Transverse colon (tissue), 4 donors: ENCODE measurements at regions of chr19 and their contacts with region 1.

Region 1: DNA sequence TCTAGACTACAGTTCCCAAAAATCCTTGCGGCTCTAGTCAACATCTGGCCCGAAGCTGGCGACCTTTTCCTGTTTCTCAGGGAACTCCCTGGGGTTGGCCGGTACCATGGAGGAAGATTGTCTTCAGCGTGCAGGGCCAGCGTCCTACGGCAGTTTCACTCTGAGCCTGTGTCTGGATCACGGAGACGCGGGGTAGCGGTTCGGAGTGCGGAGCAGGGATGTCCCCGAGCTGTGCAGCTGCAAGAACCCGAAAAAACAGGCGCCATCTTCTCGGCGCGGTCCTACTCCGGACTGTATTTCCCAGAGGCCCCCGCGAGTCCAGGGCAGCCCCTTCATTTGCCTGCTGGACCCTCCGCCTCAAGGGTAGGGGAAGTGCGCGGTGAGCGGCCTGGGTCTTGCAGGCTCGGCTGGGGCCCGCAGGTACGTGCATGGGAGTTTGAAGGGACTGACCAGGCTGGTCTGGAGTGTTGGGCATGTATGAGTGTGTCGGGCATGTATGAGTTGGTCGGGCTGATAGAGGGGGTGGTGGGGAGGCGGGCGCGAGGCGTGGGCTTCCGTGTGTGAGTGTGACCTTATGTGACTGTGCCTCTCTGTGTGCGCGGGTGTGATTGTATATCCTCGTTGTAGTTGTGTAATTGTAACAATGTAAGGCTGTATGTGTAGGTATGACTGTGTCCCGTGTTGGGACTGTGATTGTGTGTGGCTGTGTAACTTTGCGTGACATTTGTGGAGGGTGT is at the start of gene ZNF383:
- DNase-seq: peak; percentile 86
- H3K4me3 ChIP-seq: peak within 1 kb of the TSS; percentile 61 to 86 (median 80)
- H3K27ac ChIP-seq: peak within 1 kb of the TSS; percentile 87 to 96 (median 90)
- H3K4me1 ChIP-seq: peaks cover 4 to 13% (median 10%) of the 10 kb centered on the region in 4 donors
- H3K27me3 ChIP-seq: no peaks in the 10 kb centered on the region
- CTCF ChIP-seq: no peak
- EP300 ChIP-seq: no peak
- POLR2A ChIP-seq: peak; percentile 75
- total RNA-seq, gene ZNF383: 1.5 to 54.9 (median 9.5) TPM

Region 2: GRCh38 chr19:37095859-37096258 is 122.2 kb before region 1 on chr19:
- in situ Hi-C with region 1: no loop called
- intact Hi-C with region 1: no loop called
- DNase-seq: no peak
- H3K4me3 ChIP-seq: no peak overlapping the region
- H3K27ac ChIP-seq: no peak overlapping the region
- H3K4me1 ChIP-seq: no peaks in the 10 kb centered on the region
- H3K27me3 ChIP-seq: no peaks in the 10 kb centered on the region
- CTCF ChIP-seq: no peak
- EP300 ChIP-seq: no peak
- POLR2A ChIP-seq: no peak

Region 3: DNA sequence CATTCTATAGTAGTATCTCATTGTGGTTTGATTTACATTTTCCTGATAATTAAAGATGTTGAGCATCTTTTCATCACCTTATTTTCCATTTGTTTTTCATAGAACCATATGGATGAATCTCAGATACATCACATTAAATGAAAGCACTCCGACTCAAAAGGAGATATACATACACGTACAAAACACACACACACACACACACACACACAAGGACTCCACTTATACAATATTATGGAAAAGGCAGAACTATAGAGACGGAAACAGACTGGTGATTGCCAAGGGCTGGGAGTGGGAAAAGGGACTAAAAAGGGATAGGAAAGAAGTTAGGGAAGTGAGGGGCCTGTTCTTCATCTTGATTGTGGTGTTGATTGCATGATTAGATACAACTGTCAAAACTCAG is 69.8 kb before region 1 on chr19:
- in situ Hi-C with region 1: no loop called
- intact Hi-C with region 1: no loop called
- DNase-seq: no peak
- H3K4me3 ChIP-seq: no peak overlapping the region
- H3K27ac ChIP-seq: no peak overlapping the region
- H3K4me1 ChIP-seq: no peaks in the 10 kb centered on the region
- H3K27me3 ChIP-seq: no peaks in the 10 kb centered on the region
- CTCF ChIP-seq: no peak
- EP300 ChIP-seq: no peak
- POLR2A ChIP-seq: no peak

Region 4: GRCh38 chr19:37334179-37335071 is 116.4 kb after region 1 on chr19:
- in situ Hi-C with region 1: loop called in 1 of 4 experiments (anchors 25 kb)
- intact Hi-C with region 1: no loop called
- DNase-seq: peak; percentile 92
- H3K4me3 ChIP-seq: peak overlapping the region; percentile 55 to 79 (median 60)
- H3K27ac ChIP-seq: peak overlapping the region; percentile 80 to 88 (median 86)
- H3K4me1 ChIP-seq: peaks cover 6 to 15% (median 12%) of the 10 kb centered on the region in 4 donors
- H3K27me3 ChIP-seq: no peaks in the 10 kb centered on the region
- CTCF ChIP-seq: no peak
- EP300 ChIP-seq: no peak
- POLR2A ChIP-seq: peak; percentile 48